ENCODE measurements at regions of chr11 and their contacts with region 1.

Region 1: DNA sequence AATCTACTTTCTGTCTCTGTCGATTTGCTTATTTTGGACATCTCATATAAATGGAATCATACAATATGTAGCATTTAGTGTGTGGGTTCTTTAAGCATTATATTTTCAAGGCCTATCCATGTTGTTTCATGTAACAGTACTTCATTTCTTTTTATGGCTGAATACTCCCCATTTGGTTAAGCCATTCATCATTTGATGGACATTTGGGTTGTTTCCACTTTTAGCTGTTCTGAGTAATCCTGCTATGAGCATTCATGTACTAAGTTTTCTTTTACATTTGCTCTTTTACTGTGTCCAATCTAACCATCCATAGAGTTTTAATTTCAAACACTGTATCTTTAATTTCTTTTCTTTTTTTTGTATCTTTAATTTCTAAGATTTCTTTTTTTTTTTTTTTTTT is 55.6 kb upstream of the SPTBN2 start:
- DNase-seq: peak; percentile 2
- ATAC-seq: no peak
- H3K4me3 ChIP-seq: no peak overlapping the region
- H3K27ac ChIP-seq: no peak overlapping the region
- H3K4me1 ChIP-seq: peaks cover 5% of the 10 kb centered on the region; the same call in 1 of the 2 replicates
- H3K27me3 ChIP-seq: no peaks in the 10 kb centered on the region
- CTCF ChIP-seq: no peak
- POLR2A ChIP-seq: no peak
- RAD21 ChIP-seq: no peak

Region 2: GRCh38 chr11:66744485-66745340 is 39.9 kb before region 1 on chr11:
- CTCF ChIA-PET with region 1: no interaction called
- POLR2A ChIA-PET with region 1: no interaction called
- dilution Hi-C with region 1: no loop called
- in situ Hi-C with region 1: no loop called
- intact Hi-C with region 1: loop called (anchors 5 kb)
- DNase-seq: peak; percentile 45
- ATAC-seq: peak; percentile 98
- H3K4me3 ChIP-seq: peak overlapping the region; percentile 87
- H3K27ac ChIP-seq: peak overlapping the region; percentile 68
- H3K4me1 ChIP-seq: peaks cover 3% of the 10 kb centered on the region
- H3K27me3 ChIP-seq: no peaks in the 10 kb centered on the region
- CTCF ChIP-seq: no peak
- POLR2A ChIP-seq: no peak
- RAD21 ChIP-seq: no peak

Region 3: GRCh38 chr11:66855574-66856495 is 71.3 kb after region 1 on chr11:
- CTCF ChIA-PET with region 1: no interaction called
- POLR2A ChIA-PET with region 1: no interaction called
- dilution Hi-C with region 1: no loop called
- in situ Hi-C with region 1: no loop called
- intact Hi-C with region 1: no loop called
- DNase-seq: peak; percentile 84
- ATAC-seq: peak; percentile 95
- H3K4me3 ChIP-seq: peak overlapping the region; percentile 57
- H3K27ac ChIP-seq: peak overlapping the region; percentile 78
- H3K4me1 ChIP-seq: peaks cover 4% of the 10 kb centered on the region
- H3K27me3 ChIP-seq: no peaks in the 10 kb centered on the region
- CTCF ChIP-seq: 0 out of 2 replicates have a peak, but pooled peaks have one; percentile 4
- POLR2A ChIP-seq: peak; percentile 78
- RAD21 ChIP-seq: no peak